Right cardiac atrium (tissue), 5 donors: ENCODE measurements at regions of chr6 and their contacts with region 1.

Region 1: DNA sequence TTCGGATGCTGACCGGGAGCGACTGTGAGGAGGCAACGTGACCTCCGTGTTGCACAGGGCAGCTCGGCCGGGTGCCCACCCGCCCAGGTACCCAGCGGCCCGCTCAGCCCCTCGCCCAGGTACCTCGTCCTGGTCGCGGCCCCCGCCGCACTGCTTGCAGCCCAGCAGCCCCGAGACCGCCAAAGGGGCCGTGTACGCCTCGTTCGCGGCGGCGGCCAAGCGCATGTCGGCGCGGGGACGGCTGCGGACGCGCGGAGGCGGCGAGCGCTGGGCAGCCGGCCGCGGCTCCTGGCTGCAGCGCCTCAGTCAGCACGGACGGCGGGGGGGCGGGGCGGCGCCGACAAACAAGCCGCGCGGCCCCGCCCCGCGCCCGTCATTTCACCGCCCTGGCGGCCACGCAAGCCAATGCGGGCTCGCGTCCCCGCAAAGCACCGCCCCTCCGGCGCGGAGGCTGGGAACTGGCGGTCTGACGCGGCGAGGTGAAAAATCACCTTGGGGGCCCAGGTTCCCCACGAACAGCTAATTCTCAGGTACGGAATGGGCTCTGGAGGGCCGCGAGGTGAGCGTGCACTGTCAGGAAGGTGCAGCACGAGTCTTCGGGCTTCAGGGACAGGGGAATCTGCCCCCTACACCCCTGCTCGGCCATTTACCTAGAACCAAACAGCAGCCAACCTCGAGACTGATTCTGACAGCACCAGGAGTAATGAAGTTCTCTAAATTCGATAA is 85.2 kb downstream of the SESN1 start:
- DNase-seq: peak; percentile 95 to 99 (median 98)
- ATAC-seq: peak; percentile 98 to 99
- H3K4me3 ChIP-seq: peak overlapping the region; percentile 80
- H3K27ac ChIP-seq: peak overlapping the region; percentile 98
- H3K4me1 ChIP-seq: no peaks in the 10 kb centered on the region
- H3K27me3 ChIP-seq: no peaks in the 10 kb centered on the region

Region 2: GRCh38 chr6:108914235-108915022 is 95.0 kb before region 1 on chr6:
- intact Hi-C with region 1: loop called in 1 of 4 experiments (anchors 10 kb)
- DNase-seq: peak in 1 of 3 donors; percentile 48
- ATAC-seq: peak; percentile 46 to 75
- H3K4me3 ChIP-seq: no peak overlapping the region
- H3K27ac ChIP-seq: no peak overlapping the region
- H3K4me1 ChIP-seq: no peaks in the 10 kb centered on the region
- H3K27me3 ChIP-seq: no peaks in the 10 kb centered on the region

Region 3: GRCh38 chr6:108947114-108947854 is 62.1 kb before region 1 on chr6:
- intact Hi-C with region 1: loop called in 2 of 4 experiments (anchors 10 kb)
- DNase-seq: peak in 1 of 3 donors; percentile 54
- ATAC-seq: peak; percentile 16 to 45
- H3K4me3 ChIP-seq: no peak overlapping the region
- H3K27ac ChIP-seq: peak overlapping the region; percentile 95
- H3K4me1 ChIP-seq: peaks cover 21% of the 10 kb centered on the region
- H3K27me3 ChIP-seq: no peaks in the 10 kb centered on the region

Region 4: DNA sequence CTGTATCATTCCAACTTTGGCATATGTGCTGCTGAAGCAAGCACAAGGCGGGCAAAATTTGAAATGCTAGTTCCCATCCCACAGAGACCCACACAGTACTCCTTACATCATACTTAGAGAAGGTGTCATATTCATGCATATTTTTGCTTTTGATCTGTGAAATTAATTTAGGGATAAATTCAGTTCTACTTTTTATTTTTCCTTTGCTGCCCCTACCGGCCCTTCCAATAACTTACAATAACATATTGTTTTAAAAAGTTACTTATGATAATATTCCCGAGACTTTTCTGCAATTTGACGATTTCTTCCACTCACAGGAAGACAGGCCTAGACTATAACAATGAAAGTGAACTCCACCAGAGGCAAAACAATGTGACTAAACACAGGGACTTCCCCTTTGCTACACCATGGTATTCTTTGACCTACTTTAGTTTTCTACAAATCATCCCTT is 50.2 kb after region 1 on chr6:
- intact Hi-C with region 1: loop called in 3 of 4 experiments (anchors 5 to 10 kb)
- DNase-seq: no peak
- ATAC-seq: peak; percentile 75 to 88
- H3K4me3 ChIP-seq: no peak overlapping the region
- H3K27ac ChIP-seq: no peak overlapping the region
- H3K4me1 ChIP-seq: peaks cover 16% of the 10 kb centered on the region
- H3K27me3 ChIP-seq: no peaks in the 10 kb centered on the region